Mucosa of descending colon (tissue), 3 donors: ENCODE measurements at regions of chr10 and their contacts with region 1.

Region 1: GRCh38 chr10:133422821-133423771 is 1.3 kb downstream of the SPRN start:
- DNase-seq: peak in 1 of 3 donors; percentile 25
- ATAC-seq: peak; percentile 27
- H3K4me3 ChIP-seq: no peak overlapping the region
- H3K4me1 ChIP-seq: no peaks in the 10 kb centered on the region
- CTCF ChIP-seq: no peak

Region 2: DNA sequence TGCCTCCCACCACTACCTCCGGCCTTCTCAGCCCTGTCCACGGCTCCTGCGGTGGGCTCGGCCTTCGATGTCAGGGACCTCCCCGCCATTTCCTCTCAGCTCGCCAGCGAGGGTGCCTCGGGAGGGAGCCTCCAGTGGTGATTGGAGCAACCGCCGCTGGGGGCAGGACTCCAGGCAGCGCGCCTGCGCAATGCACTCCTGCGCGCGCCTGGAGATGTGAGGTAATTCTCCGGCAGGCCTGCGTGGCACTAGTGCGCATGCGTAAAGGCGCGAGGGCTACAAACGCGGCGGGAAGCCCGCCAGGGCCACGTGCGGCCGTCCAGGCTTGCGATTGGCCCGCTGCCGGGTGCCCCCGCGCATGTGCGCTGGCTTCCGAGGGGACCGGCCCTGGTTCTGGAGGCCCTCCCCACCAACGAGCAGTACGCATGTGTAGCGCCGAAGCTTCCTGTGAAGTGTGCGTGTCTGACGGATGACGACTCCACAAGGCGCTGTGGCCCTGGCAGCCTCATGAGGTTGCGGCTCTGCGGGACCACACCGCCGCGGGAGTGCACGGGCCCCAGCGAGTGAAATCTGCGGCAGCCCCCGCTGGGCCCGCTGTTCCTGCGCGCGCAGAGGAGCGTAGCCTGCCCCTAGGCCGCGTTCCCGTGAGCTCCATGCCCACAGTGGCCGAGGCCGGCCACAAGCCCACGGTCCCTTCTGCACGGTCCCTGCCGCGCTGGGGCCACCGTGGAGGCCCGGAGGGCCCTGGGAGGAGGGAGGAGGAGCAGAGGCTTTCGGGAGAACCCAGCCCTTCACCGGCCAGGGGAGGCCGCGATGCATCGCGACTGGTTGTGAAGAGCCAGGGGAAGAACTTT is 142.6 kb after region 1 on chr10 and contains the start of gene SYCE1:
- intact Hi-C with region 1: loop called in 1 of 2 experiments (anchors 10 kb)
- DNase-seq: no peak
- ATAC-seq: no peak
- H3K4me3 ChIP-seq: no peak within 1 kb of the TSS
- H3K4me1 ChIP-seq: no peaks in the 10 kb centered on the region
- CTCF ChIP-seq: no peak
- total RNA-seq, gene SYCE1: 0.20 to 0.51 TPM in 2 of 3 donors, not detected in the other